Activated naive CD4-positive, alpha-beta T cell treated with anti-CD3 and anti-CD28 coated beads for 36 hours (primary cell): ENCODE measurements at regions of chr2 and their contacts with region 1.

Region 1: GRCh38 chr2:24409700-24410556 is 49.6 kb upstream of the ITSN2 start:
- DNase-seq: peak; percentile 56
- H3K4me3 Mint-ChIP-seq: no peak overlapping the region
- H3K27ac Mint-ChIP-seq: no peak overlapping the region
- H3K4me1 Mint-ChIP-seq: no peaks in the 10 kb centered on the region
- H3K27me3 Mint-ChIP-seq: peaks cover 4% of the 10 kb centered on the region

Region 2: DNA sequence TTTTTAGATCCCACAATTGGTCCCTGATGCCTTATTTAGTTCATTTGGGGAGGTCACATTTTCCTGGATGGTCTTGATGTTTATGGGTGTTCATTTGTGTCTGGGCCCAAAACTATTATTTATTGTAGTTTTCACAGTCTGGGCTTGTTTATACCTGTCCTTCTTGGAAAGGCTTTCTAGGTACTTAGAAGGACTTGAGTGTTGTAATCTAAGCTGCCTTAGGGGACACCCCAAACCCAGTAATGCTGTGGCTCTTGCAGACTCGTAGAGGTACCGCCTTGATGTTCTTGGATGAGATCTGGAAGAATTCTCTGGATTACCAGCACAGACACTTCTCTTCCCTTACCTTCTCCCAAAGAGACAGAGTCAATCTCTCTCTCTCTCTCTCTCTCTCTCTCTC is 24.6 kb before region 1 on chr2:
- CTCF ChIA-PET with region 1: no interaction called
- intact Hi-C with region 1: no loop called
- DNase-seq: no peak
- H3K4me3 Mint-ChIP-seq: no peak overlapping the region
- H3K27ac Mint-ChIP-seq: no peak overlapping the region
- H3K4me1 Mint-ChIP-seq: no peaks in the 10 kb centered on the region
- H3K27me3 Mint-ChIP-seq: no peaks in the 10 kb centered on the region

Region 3: DNA sequence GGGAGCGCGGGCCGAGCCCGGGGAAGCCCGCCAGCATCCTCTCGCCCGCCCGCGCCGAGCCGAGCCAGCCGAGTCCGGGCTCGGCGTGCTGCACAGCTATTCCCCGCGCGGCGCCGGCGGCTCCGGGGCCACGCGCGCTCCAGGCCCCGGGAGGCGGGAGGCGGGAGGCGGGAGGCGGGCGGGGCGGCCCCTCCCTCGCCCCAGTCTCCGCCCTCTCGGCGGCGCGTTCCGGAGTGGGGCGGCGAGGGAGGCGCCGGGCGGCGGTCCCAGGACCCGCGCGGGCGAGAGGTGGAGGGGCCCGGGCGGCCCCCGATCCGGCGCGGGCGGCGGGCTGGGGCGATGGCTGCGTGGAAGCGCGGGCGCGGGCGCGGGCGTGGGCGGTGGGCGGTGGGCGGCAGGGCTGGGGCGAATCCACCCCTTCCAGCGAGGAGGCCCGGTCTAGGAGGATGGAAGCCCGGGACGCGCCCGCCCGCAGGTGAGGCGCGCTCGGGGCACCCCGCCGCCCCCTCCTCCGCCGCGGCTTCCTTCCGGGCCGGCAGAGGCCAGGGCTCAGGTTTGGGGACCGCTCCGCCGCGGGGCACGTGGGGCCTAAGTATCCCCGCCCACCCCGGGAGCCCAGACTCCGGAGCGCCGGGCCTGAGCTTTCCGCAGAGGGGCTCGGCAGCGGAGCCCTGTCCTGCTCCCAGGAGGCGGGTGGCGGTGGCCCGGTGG is 510.3 kb after region 1 on chr2 and contains the start of gene ADCY3:
- CTCF ChIA-PET with region 1: no interaction called
- intact Hi-C with region 1: loop called (anchors 2 kb)
- DNase-seq: peak; percentile 64
- H3K4me3 Mint-ChIP-seq: peak within 1 kb of the TSS; percentile 95
- H3K27ac Mint-ChIP-seq: peak within 1 kb of the TSS; percentile 86
- H3K4me1 Mint-ChIP-seq: peaks cover 30% of the 10 kb centered on the region
- H3K27me3 Mint-ChIP-seq: no peaks in the 10 kb centered on the region
- total RNA-seq, gene ADCY3: 44.8 to 49.9 TPM

Region 4: GRCh38 chr2:25131567-25132298 is 721.8 kb after region 1 on chr2:
- CTCF ChIA-PET with region 1: interaction called, 14 read pairs
- intact Hi-C with region 1: loop called (anchors 1 kb)
- DNase-seq: peak; percentile 11
- H3K4me3 Mint-ChIP-seq: peak overlapping the region; percentile 60
- H3K27ac Mint-ChIP-seq: peak overlapping the region; percentile 39
- H3K4me1 Mint-ChIP-seq: peaks cover 10% of the 10 kb centered on the region
- H3K27me3 Mint-ChIP-seq: peaks cover 48% of the 10 kb centered on the region